Right ventricle myocardium inferior (tissue), 1 donor: ENCODE measurements at regions of chr22 and their contacts with region 1.

Region 1: DNA sequence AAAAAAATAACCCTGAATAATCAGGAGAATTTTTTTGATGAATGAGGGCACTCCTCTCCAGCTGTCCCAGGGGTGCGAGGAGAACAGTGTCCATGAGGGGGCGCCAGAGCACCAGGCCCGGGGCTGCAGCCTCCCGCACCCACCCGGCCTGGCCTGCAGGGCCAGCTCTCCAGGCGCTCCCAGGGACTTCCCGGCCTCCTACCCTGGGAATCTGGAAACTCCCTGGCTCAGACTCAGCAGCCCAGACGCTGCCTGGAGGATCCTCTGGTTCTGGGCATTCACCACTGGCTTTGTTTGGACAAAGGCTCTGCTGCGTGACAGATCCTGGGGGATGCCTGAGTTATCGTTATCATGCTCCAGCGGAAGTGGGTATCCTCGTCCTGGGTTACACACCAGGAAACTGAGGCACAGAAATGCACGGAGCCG is 31.0 kb downstream of the MCM5 start:
- DNase-seq: peak; percentile 93
- ATAC-seq: peak; percentile 97

Region 2: DNA sequence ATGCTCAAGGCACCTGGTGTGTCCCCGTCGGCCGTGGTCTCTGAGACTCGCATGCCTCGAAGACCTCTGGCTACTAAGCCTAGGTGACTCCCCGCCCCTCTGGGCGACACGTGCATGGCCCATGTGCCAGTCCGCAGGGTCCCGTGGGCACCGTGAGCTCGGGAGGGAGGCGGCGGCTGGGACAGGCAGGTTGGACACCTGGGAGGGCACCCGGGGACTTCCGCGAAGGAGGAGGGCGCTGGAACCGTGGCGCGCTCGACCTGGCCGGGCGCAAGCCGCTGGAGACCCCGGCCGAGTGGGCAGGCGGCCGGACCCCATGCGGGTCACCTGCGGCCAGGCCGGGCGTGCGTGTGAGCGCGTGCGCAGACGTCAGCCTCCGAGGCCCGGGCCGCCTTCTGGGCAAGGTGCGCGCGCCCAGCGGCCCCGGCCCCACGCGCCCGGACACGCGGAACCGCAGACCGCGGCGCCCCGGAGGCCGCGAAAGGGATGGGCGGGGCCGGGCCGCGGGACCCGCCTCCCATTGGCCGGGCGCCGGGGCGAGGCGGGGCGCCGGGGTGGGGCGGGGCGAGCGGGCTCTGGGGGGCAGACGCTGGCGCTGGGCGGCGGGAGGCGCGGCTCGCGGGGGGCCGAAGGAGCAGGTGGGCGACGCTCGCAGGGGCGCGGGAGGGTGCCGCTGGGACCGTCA is 109.1 kb after region 1 on chr22:
- intact Hi-C with region 1: loop called (anchors 1 kb)
- DNase-seq: peak; percentile 78
- ATAC-seq: peak; percentile 82

Region 3: GRCh38 chr22:36123673-36124630 is 693.0 kb after region 1 on chr22:
- intact Hi-C with region 1: loop called (anchors 2 kb)
- DNase-seq: peak; percentile 97
- ATAC-seq: peak; percentile 96

Region 4: GRCh38 chr22:36481393-36482168 is 1050.7 kb after region 1 on chr22 and contains the start of gene TXN2:
- intact Hi-C with region 1: no loop called
- DNase-seq: peak; percentile 98
- ATAC-seq: peak; percentile 97
- total RNA-seq, gene TXN2: 127 TPM